PC-9 (cell line): ENCODE measurements at regions of chr6 and their contacts with region 1.

Region 1: DNA sequence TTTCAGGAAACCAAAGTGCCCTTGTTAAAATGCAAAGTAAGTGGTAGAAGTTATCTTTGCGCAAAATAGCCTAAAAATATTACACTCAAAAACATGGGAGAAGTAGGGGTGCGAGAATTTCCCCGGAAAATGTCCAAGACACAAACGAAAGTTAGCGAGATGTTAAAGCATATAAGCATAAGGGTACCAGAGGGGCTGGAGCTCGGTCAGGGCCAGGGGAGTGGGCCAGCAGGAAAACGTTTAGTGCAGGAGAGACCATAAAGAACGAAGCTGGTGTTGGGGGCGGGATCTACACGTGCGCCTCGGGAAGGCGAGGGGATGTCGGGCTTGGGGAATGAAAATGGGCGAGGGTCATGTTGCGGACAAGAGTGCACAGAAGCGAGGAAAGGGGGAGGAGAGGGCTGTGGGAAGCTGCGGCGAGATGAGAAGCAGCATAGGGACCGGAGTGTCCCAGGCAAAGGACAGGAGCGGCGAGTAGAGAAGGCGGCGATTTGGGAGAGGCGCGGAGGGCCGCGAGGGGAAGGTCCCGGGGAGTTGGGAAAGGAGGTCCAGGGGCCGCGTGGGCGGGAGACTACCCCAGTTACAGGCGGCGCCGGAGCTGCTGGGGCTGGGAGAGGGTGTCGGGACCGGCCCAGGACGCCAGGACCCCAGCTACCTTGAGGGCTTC is 600 bp downstream of the XPO5 start:
- DNase-seq: no peak
- H3K4me3 ChIP-seq: peak overlapping the region; percentile 71
- H3K27ac ChIP-seq: peak overlapping the region; percentile 33; the same call in 1 of the 2 replicates
- H3K4me1 ChIP-seq: peaks cover 38% of the 10 kb centered on the region
- H3K27me3 ChIP-seq: no peaks in the 10 kb centered on the region
- CTCF ChIP-seq: no peak

Region 2: GRCh38 chr6:43263314-43264178 is 311.7 kb before region 1 on chr6:
- CTCF ChIA-PET with region 1: interaction called, 19 read pairs
- POLR2A ChIA-PET with region 1: no interaction called
- intact Hi-C with region 1: no loop called
- DNase-seq: peak in 1 of 2 experiments; percentile 74
- H3K4me3 ChIP-seq: no peak overlapping the region
- H3K27ac ChIP-seq: no peak overlapping the region
- H3K4me1 ChIP-seq: no peaks in the 10 kb centered on the region
- H3K27me3 ChIP-seq: no peaks in the 10 kb centered on the region
- CTCF ChIP-seq: peak; percentile 83

Region 3: DNA sequence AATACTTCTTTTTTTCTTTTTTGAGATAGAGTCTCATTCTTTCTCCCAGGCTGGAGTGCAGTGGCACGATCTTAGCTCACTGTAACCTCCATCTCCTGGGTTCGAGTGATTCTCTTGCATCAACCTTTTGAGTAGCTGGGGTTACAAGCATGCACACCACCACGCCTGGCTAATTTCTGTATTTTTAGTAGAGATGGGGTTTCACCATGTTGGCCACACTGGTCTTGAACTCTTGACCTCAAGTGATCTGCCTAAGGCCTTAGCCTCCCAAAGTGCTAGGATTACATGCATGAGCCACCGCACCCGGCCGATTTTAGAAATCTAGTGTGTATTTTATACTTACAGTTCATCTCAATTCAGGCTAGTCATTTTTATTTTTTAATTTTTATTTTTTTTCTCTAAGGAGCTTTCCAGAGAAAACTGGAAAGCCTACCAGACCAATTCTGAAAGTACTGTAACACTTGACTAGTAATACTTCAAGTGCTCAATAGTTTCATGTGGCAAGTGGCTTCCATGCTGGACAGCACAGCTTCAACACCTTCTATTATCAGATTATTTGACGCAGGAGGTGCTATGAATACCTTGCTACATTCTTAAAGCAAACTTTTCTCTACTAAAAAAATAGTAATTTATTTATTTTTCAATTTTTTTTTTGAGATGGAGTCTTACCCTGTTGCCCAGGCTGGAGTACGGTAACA is 33.3 kb before region 1 on chr6:
- CTCF ChIA-PET with region 1: no interaction called
- POLR2A ChIA-PET with region 1: no interaction called
- intact Hi-C with region 1: no loop called
- DNase-seq: no peak
- H3K4me3 ChIP-seq: no peak overlapping the region
- H3K27ac ChIP-seq: no peak overlapping the region
- H3K4me1 ChIP-seq: no peaks in the 10 kb centered on the region
- H3K27me3 ChIP-seq: no peaks in the 10 kb centered on the region
- CTCF ChIP-seq: no peak

Region 4: GRCh38 chr6:43683708-43684455 is 108.6 kb after region 1 on chr6:
- CTCF ChIA-PET with region 1: no interaction called
- POLR2A ChIA-PET with region 1: no interaction called
- intact Hi-C with region 1: no loop called
- DNase-seq: no peak
- H3K4me3 ChIP-seq: no peak overlapping the region
- H3K27ac ChIP-seq: no peak overlapping the region
- H3K4me1 ChIP-seq: peaks cover 20% of the 10 kb centered on the region
- H3K27me3 ChIP-seq: no peaks in the 10 kb centered on the region
- CTCF ChIP-seq: no peak